Panc1 (cell line): ENCODE measurements at regions of chr19 and their contacts with region 1.

Region 1: DNA sequence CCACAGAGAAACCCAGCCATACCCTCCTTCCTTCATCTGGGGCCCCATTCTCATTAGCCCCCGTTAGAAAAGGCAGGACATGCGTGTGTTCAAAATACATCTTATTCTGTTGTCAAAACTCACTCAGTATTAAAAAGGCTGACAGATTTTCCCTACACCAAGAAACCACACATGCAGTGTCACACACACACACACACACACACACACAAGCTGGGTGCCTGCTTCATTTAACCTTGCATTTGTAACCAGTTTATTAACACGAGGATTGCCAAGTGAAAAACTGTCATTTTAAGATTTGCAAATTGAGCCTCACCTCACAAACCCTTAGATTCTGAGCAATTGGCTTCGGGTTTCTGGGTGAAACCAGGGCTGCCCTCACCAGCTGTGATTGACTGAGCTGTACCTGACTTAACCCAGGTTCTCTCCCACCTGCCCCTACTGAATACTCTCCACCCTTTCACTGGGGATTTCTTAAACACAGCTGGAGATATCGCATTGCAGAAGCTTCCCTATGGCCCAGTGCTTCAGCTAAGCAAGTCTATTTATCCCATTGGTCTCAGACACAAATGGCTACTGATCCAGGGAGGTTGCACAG is 172.7 kb upstream of the ZNF507 start:
- DNase-seq: no peak
- ATAC-seq: no peak
- H3K4me3 ChIP-seq: no peak overlapping the region
- H3K27ac ChIP-seq: no peak overlapping the region
- H3K4me1 ChIP-seq: no peaks in the 10 kb centered on the region
- H3K27me3 ChIP-seq: peaks cover 16% of the 10 kb centered on the region
- CTCF ChIP-seq: no peak

Region 2: GRCh38 chr19:30999726-31000125 is 1172.9 kb before region 1 on chr19:
- CTCF ChIA-PET with region 1: no interaction called
- POLR2A ChIA-PET with region 1: no interaction called
- in situ Hi-C with region 1: no loop called
- intact Hi-C with region 1: no loop called
- DNase-seq: no peak
- ATAC-seq: no peak
- H3K4me3 ChIP-seq: no peak overlapping the region
- H3K27ac ChIP-seq: no peak overlapping the region
- H3K4me1 ChIP-seq: no peaks in the 10 kb centered on the region
- H3K27me3 ChIP-seq: no peaks in the 10 kb centered on the region
- CTCF ChIP-seq: no peak

Region 3: DNA sequence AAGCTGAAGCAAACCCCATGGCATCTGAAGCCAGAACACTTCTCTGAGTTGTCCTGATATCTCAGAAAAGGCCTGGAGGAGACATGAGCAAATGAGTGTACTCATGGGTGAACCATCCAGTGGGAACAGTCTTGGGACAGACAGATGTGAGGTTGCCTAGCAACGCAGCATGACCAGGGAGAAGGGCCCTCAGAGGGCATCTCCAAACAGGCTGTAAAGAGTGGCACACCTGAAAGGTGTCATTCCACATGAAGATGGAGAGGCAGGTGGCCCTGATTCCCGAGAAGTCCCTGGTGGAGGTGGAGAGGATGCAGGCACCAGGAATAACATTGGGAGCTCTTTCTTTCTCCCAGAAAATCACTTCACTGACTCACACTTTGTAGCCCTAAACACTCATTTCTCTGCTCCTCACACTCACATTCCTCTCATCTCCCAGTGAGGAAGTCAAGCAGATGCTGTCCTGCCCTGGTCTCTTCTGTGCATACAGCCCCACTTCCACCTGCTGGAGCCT is 736.4 kb before region 1 on chr19:
- CTCF ChIA-PET with region 1: no interaction called
- POLR2A ChIA-PET with region 1: no interaction called
- in situ Hi-C with region 1: no loop called
- intact Hi-C with region 1: no loop called
- DNase-seq: no peak
- ATAC-seq: no peak
- H3K4me3 ChIP-seq: no peak overlapping the region
- H3K27ac ChIP-seq: no peak overlapping the region
- H3K4me1 ChIP-seq: no peaks in the 10 kb centered on the region
- H3K27me3 ChIP-seq: no peaks in the 10 kb centered on the region
- CTCF ChIP-seq: no peak

Region 4: DNA sequence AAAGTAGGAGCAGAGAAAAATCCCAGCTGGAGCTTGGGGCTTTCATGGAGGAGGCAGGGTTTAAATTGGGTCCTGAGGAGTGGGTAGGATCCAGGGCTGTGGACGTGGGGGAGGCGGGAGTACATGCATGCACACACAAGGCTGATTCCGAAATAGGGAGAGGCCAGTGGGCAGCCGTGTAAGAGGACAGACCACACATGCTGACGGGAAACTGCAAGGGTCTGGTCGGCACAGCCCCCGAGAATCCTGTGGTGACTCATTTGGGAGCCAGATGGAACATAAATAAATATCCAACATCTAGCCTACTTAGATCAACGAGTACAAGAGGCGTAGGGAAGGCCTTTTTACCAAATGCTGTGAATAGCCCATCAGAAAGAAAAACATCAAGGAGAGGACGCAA is 43.5 kb before region 1 on chr19:
- CTCF ChIA-PET with region 1: no interaction called
- POLR2A ChIA-PET with region 1: interaction called, 10 read pairs
- in situ Hi-C with region 1: no loop called
- intact Hi-C with region 1: no loop called
- DNase-seq: no peak
- ATAC-seq: no peak
- H3K4me3 ChIP-seq: no peak overlapping the region
- H3K27ac ChIP-seq: no peak overlapping the region
- H3K4me1 ChIP-seq: no peaks in the 10 kb centered on the region
- H3K27me3 ChIP-seq: no peaks in the 10 kb centered on the region
- CTCF ChIP-seq: no peak

Region 5: GRCh38 chr19:32138416-32138815 is 34.2 kb before region 1 on chr19:
- CTCF ChIA-PET with region 1: interaction called, 15 read pairs
- POLR2A ChIA-PET with region 1: no interaction called
- in situ Hi-C with region 1: no loop called
- intact Hi-C with region 1: no loop called
- DNase-seq: no peak
- ATAC-seq: no peak
- H3K4me3 ChIP-seq: no peak overlapping the region
- H3K27ac ChIP-seq: no peak overlapping the region
- H3K4me1 ChIP-seq: no peaks in the 10 kb centered on the region
- H3K27me3 ChIP-seq: peaks cover 6% of the 10 kb centered on the region
- CTCF ChIP-seq: no peak; the same call in 1 of the 2 replicates